Naive thymus-derived CD4-positive, alpha-beta T cell (primary cell): ENCODE measurements at regions of chr6 and their contacts with region 1.

Region 1: DNA sequence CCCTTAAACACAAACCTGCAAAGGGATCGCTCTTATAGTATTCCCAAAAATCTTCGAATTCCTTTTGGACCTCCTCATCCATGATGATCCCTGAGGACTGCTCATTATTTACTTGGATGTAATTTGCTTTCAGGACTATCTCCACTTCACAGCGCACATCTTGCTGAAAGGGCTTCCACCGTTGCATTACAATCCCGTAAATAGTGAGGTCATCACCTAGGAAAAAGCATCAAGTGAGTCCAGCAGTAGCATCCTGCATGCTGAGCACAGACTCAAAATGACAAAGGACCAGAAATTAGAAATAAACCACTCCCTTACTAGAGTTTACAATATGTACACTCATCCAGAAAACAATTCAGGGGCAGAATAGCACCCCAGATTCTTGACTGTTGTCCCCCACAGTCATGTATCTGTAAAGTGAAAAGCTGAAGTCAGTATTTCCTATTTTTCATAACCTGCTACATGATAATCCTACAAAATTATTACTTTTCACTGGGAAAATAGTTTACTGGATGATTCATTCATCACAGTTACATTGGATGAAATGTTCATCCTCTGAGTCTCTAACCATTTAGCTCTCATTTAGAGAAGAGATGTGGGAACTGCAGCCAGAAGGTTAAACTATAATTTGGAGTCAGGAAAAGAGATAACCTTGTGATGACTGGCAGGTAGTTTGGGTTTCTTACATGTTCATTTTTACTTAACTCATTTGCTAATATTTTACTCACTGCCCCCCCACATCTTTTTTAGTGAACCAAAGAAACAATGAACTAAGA is 17.2 kb downstream of the MCM9 start:
- DNase-seq: no peak
- ATAC-seq: no peak
- H3K4me3 ChIP-seq: no peak overlapping the region
- H3K4me3 Mint-ChIP-seq: no peak overlapping the region
- H3K27ac ChIP-seq: no peak overlapping the region
- H3K27ac Mint-ChIP-seq: peak overlapping the region in 3 of 9 donors; percentile 21 to 72 (median 50)
- H3K4me1 ChIP-seq: no peaks in the 10 kb centered on the region
- H3K4me1 Mint-ChIP-seq: peaks cover 0 to 15% (median 3%) of the 10 kb centered on the region in 7 donors
- H3K27me3 ChIP-seq: no peaks in the 10 kb centered on the region
- H3K27me3 Mint-ChIP-seq: no peaks in the 10 kb centered on the region

Region 2: DNA sequence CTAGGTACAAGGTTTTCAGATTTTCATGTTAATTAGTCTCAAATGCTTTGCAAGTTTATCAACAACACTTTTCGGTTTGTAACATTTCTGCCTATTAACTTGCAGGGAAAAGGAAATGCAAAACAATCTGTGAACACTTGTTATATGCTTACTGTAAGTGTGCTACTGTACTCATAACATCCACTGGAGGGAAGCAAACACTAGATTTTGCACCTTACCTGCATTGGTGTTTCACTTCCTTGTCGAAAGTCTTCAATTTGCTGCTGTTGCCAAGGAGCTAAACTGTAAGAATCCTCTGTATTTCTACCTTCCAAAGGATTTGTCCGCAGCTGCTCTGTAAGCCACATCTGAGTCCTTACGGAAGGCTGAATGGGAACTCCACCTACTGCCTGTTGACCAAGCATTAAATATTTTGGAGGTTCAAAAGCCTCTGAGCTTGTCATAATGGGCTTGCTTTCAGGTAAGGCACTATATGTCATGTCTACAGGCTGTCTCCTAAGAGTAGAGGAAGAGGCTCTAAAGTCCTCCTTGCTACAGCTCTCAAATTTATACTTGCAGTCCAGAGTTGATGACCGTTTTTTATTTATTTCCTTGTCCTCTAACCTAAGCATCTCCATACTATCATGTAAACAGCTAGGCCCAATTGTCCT is 352.3 kb before region 1 on chr6:
- CTCF ChIA-PET with region 1: no interaction called
- POLR2A ChIA-PET with region 1: no interaction called
- intact Hi-C with region 1: no loop called
- DNase-seq: peak in 7 of 9 donors; percentile 55 to 77 (median 63)
- ATAC-seq: peak; percentile 94
- H3K4me3 ChIP-seq: no peak overlapping the region
- H3K4me3 Mint-ChIP-seq: no peak overlapping the region
- H3K27ac ChIP-seq: peak overlapping the region; percentile 34
- H3K27ac Mint-ChIP-seq: peak overlapping the region; percentile 16 to 90 (median 61)
- H3K4me1 ChIP-seq: no peaks in the 10 kb centered on the region
- H3K4me1 Mint-ChIP-seq: peaks cover 7 to 60% (median 42%) of the 10 kb centered on the region in 7 donors
- H3K27me3 ChIP-seq: no peaks in the 10 kb centered on the region
- H3K27me3 Mint-ChIP-seq: no peaks in the 10 kb centered on the region

Region 3: GRCh38 chr6:118902726-118903125 is 15.0 kb before region 1 on chr6:
- CTCF ChIA-PET with region 1: no interaction called
- POLR2A ChIA-PET with region 1: interaction called, 3 read pairs
- intact Hi-C with region 1: loop called (anchors 2 kb)
- DNase-seq: no peak
- ATAC-seq: no peak
- H3K4me3 ChIP-seq: no peak overlapping the region
- H3K4me3 Mint-ChIP-seq: peak overlapping the region in 5 of 10 donors; percentile 13 to 63 (median 24)
- H3K27ac ChIP-seq: peak overlapping the region; percentile 23
- H3K27ac Mint-ChIP-seq: peak overlapping the region; percentile 1 to 81 (median 52)
- H3K4me1 ChIP-seq: peaks cover 33 to 39% of the 10 kb centered on the region in 2 donors
- H3K4me1 Mint-ChIP-seq: peaks cover 43 to 96% (median 90%) of the 10 kb centered on the region in 7 donors
- H3K27me3 ChIP-seq: no peaks in the 10 kb centered on the region
- H3K27me3 Mint-ChIP-seq: no peaks in the 10 kb centered on the region